ENCODE measurements at regions of chr6 and their contacts with region 1.

Region 1: GRCh38 chr6:30914076-30914853 is at the start of gene VARS2:
- DNase-seq: peak; percentile 85 to 88 (median 86)
- H3K4me3 ChIP-seq: peak within 1 kb of the TSS; percentile 15 to 88 (median 76)
- H3K27ac ChIP-seq: peak within 1 kb of the TSS in 1 of 2 experiments; percentile 67
- H3K4me1 ChIP-seq: peaks cover 0 to 23% (median 22%) of the 10 kb centered on the region in 4 experiments
- H3K27me3 ChIP-seq: no peaks in the 10 kb centered on the region

Region 2: DNA sequence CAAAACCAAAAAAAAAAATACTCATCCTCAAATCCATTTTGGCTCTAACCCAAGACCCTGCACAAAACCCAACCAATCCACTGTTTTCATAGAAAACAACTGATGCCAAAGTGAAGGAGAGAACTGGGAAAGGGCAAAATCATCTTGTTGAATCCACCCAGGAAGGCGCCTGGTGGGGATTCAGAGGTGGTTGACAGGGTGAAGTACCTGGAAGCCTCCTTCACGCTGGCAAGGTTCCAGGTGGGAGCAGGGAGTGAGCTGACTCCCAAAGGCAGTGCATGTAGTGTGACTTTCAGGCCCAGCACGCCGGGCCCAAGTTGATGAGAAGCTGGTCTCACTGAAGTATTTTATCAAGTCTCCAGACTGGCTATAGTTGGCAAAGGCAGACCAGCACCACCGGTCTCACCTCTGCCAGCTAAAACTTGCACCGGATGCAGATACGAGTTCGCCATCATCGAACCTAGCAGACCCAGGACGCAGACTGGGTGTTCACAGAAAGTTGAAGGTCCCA is 313.8 kb before region 1 on chr6:
- CTCF ChIA-PET with region 1: no interaction called
- POLR2A ChIA-PET with region 1: no interaction called
- DNase-seq: no peak
- H3K4me3 ChIP-seq: no peak overlapping the region
- H3K27ac ChIP-seq: no peak overlapping the region
- H3K4me1 ChIP-seq: peaks cover 0 to 7% (median under 1%) of the 10 kb centered on the region in 4 experiments
- H3K27me3 ChIP-seq: no peaks in the 10 kb centered on the region

Region 3: GRCh38 chr6:30828027-30828960 is 86.0 kb before region 1 on chr6:
- CTCF ChIA-PET with region 1: interaction called, 119 read pairs
- POLR2A ChIA-PET with region 1: interaction called, 3 read pairs
- DNase-seq: peak; percentile 80 to 90 (median 88)
- H3K4me3 ChIP-seq: peak overlapping the region in 1 of 7 experiments; percentile 33
- H3K27ac ChIP-seq: peak overlapping the region in 1 of 2 experiments; percentile 15
- H3K4me1 ChIP-seq: peaks cover 9 to 41% (median 35%) of the 10 kb centered on the region in 4 experiments
- H3K27me3 ChIP-seq: peaks cover 0 to 3% (median 0%) of the 10 kb centered on the region in 5 experiments

Region 4: GRCh38 chr6:30862156-30862875 is 51.9 kb before region 1 on chr6:
- CTCF ChIA-PET with region 1: no interaction called
- POLR2A ChIA-PET with region 1: no interaction called
- DNase-seq: no peak
- H3K4me3 ChIP-seq: no peak overlapping the region
- H3K27ac ChIP-seq: no peak overlapping the region
- H3K4me1 ChIP-seq: no peaks in the 10 kb centered on the region
- H3K27me3 ChIP-seq: no peaks in the 10 kb centered on the region

Region 5: DNA sequence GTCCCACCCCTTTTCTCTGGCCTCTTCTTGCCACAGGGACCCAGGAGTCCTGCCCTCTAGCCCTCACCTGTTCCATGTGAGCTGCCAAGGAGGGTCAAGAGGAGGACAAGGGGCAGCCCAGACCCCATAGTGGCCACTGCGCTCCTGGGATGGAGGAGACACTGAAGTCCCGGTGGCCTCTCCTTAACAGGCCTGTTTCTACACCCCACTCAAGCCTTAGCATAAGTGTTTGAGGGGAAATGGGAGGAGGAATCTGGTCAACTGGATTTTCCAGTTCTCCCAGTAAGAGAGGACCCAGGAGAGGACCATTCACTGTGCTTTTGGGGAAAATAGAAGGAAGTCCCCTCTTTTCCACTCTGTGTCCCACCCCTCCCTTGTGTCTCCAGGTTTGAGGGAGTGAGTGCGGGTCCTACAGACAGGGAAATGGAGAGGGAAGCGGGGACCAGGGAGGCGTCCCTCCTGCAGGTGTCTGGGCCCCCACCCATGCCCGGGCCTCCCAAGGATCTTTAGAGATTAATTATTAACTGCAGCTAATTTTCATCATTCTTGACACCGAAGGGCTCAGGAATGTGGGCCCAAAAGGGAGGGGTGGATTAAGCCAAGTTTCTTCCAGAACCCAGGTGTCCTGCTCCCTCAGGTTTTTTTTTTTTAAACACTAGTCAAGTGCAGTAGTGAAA is 17.8 kb after region 1 on chr6 and contains the start of gene SFTA2:
- CTCF ChIA-PET with region 1: interaction called, 10 read pairs
- POLR2A ChIA-PET with region 1: no interaction called
- DNase-seq: no peak
- H3K4me3 ChIP-seq: no peak within 1 kb of the TSS
- H3K27ac ChIP-seq: no peak within 1 kb of the TSS
- H3K4me1 ChIP-seq: no peaks in the 10 kb centered on the region
- H3K27me3 ChIP-seq: peaks cover 0 to 3% (median 0%) of the 10 kb centered on the region in 5 experiments

Region 6: DNA sequence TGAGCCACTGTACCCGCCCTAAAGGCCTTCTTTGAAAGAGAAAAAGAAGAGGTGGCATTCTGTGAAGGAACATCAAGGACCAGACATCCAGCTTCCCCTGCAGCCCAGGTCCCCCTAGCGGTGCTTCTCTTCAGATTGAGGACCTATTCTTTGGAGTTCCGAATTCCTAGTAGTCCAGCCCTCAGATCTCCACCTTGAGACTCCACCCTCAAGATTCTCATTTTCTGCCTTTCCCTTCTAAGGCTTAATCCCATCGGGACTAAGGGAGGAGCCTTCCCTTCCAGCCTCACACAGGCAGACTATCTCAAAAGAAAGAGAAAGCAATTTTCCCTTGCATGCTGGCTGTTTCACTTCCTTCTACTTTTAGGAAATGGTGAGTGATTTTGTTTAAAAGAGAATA is 128.5 kb after region 1 on chr6:
- CTCF ChIA-PET with region 1: interaction called, 17 read pairs
- POLR2A ChIA-PET with region 1: no interaction called
- DNase-seq: peak; percentile 45 to 53 (median 50)
- H3K4me3 ChIP-seq: peak overlapping the region in 3 of 7 experiments; percentile 24 to 57 (median 32)
- H3K27ac ChIP-seq: no peak overlapping the region
- H3K4me1 ChIP-seq: no peaks in the 10 kb centered on the region
- H3K27me3 ChIP-seq: peaks cover 0 to 14% (median 3%) of the 10 kb centered on the region in 5 experiments

Region 7: GRCh38 chr6:31068669-31069340 is 154.5 kb after region 1 on chr6:
- CTCF ChIA-PET with region 1: interaction called, 60 read pairs
- POLR2A ChIA-PET with region 1: no interaction called
- DNase-seq: peak; percentile 70 to 85 (median 82)
- H3K4me3 ChIP-seq: no peak overlapping the region
- H3K27ac ChIP-seq: no peak overlapping the region
- H3K4me1 ChIP-seq: no peaks in the 10 kb centered on the region
- H3K27me3 ChIP-seq: peaks cover 0 to 2% (median 0%) of the 10 kb centered on the region in 5 experiments

Region 8: DNA sequence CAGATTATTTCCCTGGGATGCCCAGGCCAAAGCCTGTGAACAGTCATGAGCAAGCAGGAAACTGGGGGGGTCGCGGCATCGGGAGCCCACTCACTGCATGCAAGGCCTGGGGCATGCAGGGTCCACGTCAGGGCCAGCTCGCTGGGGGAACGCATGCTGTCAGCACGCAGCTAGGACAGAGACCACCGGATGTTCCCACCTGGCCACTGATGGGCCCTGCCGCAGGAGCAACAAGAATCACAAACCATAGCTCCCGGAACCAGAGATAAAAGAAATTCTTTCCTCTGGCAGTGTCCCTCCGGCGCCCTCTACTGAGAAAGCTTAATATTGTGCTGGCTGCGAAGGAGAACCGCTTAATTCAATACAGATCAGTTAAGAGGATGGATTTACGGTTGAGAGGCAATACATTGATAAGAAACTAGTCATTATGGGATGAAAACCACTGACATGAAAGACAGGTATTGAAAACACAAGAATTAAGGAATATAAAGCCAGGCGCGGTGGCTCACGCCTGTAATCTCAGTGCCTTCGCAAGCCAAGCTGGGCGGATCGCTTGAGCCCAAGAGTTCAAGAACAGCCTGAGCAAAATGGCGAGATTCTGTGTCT is 165.5 kb after region 1 on chr6:
- CTCF ChIA-PET with region 1: interaction called, 67 read pairs
- POLR2A ChIA-PET with region 1: no interaction called
- DNase-seq: peak; percentile 61 to 78 (median 78)
- H3K4me3 ChIP-seq: peak overlapping the region in 4 of 7 experiments; percentile 42 to 78 (median 65)
- H3K27ac ChIP-seq: no peak overlapping the region
- H3K4me1 ChIP-seq: peaks cover 0 to 5% (median 4%) of the 10 kb centered on the region in 4 experiments
- H3K27me3 ChIP-seq: no peaks in the 10 kb centered on the region

Region 9: DNA sequence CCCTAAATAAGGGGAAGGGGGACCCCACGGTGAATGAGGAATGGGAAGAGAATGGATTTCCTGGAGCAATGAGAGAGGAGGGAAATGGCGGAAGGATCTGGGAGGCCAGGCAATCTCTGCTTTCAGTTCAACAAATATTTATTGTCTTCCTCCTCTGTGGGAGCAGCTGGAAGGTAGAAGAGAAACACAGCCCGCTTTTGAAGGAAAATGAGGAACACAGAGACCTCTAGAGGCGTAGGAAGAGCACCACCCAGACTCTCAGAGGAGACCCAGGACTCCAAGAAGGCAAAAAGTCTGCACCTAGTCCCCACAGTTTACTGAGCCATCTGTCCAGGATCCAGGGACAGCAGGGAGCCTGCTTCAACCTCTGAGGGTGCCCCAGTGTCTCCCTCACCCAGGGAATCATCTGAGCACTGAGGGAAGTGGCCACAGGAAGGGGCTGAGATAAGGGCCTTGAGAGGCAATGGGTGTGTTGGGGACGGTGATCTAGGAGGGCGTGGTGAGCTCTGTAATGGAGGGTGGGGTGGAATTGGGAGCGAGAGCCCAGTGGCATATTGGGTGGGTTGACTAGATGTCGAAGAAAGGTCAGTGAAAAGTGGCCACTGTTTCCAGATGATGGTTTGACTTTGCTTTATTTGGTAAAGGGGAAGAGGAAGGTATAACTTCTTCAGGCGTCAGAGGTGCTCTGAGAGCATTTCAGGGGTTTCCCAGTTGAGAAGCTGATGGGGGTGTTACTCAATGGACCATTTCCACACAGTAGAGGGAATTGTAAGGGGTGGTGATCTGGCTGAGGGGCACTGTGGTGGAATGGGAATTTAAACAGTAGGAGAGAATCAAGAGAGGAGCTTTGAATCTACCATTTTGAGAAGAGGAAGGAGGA is 200.9 kb after region 1 on chr6:
- CTCF ChIA-PET with region 1: interaction called, 10 read pairs
- POLR2A ChIA-PET with region 1: no interaction called
- DNase-seq: peak; percentile 53 to 78 (median 78)
- H3K4me3 ChIP-seq: no peak overlapping the region
- H3K27ac ChIP-seq: no peak overlapping the region
- H3K4me1 ChIP-seq: peaks cover 0 to 10% (median 7%) of the 10 kb centered on the region in 4 experiments
- H3K27me3 ChIP-seq: peaks cover 0 to 2% (median 0%) of the 10 kb centered on the region in 5 experiments